ENCODE measurements at regions of chr6 and their contacts with region 1.

Region 1: DNA sequence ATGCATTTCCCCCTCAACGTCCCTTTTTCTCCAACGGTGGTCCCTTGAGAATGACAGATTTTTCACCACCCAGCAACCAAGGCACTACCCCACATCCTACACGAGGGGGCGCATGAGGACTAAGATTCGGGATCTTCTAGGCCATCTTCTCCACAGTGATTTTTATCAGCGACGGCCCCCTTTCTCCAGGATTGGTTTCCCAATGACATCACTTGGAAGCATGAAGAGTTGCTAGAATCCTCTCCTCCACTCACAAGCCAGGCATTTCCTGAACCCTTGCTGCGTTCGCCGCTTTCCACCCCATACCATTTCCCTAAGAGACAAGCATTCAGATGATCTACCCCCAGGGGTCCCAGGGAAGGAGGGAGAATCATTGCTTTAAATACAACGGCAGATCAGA is 252.0 kb downstream of the HIVEP2 start:
- DNase-seq: peak; percentile 66
- H3K4me3 Mint-ChIP-seq: no peak overlapping the region
- H3K27ac Mint-ChIP-seq: peak overlapping the region; percentile 39
- H3K4me1 Mint-ChIP-seq: peaks cover 53% of the 10 kb centered on the region
- H3K27me3 Mint-ChIP-seq: no peaks in the 10 kb centered on the region
- CTCF ChIP-seq: peak; percentile 77

Region 2: DNA sequence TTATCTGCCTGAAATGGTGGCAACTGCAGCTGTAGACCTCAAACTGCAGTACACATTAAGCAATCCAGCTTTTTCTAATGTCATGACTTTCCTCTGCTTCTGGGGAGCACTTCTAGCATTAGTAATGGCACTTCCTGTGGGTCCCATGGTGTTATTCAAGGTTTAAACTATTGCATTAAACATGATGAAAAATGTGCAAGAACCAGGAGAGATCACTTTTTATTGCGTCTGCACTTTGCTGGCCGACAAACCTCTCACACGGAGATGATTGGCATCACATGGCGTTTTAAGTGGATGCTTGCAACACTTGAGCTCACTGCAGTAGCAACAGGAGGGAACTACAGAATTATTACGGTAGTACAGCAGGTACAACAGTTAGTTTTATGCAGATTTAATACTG is 103.6 kb after region 1 on chr6:
- CTCF ChIA-PET with region 1: no interaction called
- intact Hi-C with region 1: no loop called
- DNase-seq: no peak
- H3K4me3 Mint-ChIP-seq: no peak overlapping the region
- H3K27ac Mint-ChIP-seq: no peak overlapping the region
- H3K4me1 Mint-ChIP-seq: peaks cover 11% of the 10 kb centered on the region
- H3K27me3 Mint-ChIP-seq: no peaks in the 10 kb centered on the region
- CTCF ChIP-seq: no peak

Region 3: DNA sequence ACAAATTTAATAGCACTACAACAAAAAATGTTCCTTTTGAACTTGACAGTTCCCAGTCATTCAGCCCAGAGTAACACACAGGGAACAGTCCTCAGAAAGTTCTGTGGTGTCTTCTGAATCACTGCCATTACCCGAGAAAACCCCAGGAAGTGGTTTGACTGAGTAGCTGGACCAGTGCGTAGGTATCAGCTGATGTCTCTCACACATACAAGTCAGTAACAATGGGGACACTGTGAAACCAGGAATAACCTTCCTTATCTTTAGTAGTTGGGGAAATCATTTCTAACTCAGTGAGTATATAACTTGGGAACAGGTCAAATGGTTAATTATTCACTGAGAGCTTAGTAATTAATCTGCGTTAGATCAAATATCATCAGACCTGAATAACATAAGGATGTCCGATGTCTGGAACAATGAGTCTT is 179.0 kb after region 1 on chr6:
- CTCF ChIA-PET with region 1: no interaction called
- intact Hi-C with region 1: loop called (anchors 2 kb)
- DNase-seq: peak; percentile 66
- H3K4me3 Mint-ChIP-seq: peak overlapping the region; percentile 57
- H3K27ac Mint-ChIP-seq: peak overlapping the region; percentile 97
- H3K4me1 Mint-ChIP-seq: peaks cover 86% of the 10 kb centered on the region
- H3K27me3 Mint-ChIP-seq: no peaks in the 10 kb centered on the region
- CTCF ChIP-seq: no peak

Region 4: DNA sequence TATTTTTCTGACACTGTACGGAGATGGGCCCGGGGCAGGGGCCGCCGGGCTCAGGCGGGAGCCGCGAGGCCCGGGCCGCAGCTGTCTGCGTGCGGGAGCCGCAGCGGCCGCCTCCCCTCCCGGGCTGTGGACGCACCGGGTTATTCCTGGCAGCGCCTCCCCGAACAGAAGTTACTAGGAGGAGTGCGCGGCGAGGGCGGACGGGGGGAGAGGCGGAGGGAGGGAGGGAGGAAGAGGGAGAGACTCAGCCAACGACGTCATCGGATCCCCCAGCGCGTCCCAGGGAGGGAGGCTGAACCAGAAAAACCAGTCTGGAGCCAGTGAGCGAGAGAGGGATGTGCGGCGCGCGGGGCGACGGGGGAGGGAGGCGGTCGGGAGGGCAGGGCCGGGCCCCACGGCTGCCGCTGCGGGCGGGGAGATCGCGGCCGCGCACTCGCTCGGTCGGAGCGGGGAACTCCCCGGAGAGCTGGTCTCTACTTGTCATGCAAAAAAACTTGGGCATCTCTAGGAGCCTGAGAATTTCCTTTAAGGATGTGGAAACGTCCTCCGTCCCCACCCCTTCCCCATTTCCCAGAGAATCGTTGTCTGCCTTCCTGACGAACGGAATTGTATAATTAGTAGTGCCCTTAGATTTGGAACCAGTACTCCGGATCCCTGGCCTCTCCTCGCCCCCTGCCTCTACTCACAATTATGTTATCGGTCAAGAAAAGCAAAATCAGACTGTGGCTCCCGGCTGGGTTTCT is 253.4 kb after region 1 on chr6:
- CTCF ChIA-PET with region 1: no interaction called
- intact Hi-C with region 1: loop called (anchors 5 kb)
- DNase-seq: peak; percentile 94
- H3K4me3 Mint-ChIP-seq: peak overlapping the region; percentile 98
- H3K27ac Mint-ChIP-seq: peak overlapping the region; percentile 79
- H3K4me1 Mint-ChIP-seq: peaks cover 23% of the 10 kb centered on the region
- H3K27me3 Mint-ChIP-seq: no peaks in the 10 kb centered on the region
- CTCF ChIP-seq: no peak

Region 5: DNA sequence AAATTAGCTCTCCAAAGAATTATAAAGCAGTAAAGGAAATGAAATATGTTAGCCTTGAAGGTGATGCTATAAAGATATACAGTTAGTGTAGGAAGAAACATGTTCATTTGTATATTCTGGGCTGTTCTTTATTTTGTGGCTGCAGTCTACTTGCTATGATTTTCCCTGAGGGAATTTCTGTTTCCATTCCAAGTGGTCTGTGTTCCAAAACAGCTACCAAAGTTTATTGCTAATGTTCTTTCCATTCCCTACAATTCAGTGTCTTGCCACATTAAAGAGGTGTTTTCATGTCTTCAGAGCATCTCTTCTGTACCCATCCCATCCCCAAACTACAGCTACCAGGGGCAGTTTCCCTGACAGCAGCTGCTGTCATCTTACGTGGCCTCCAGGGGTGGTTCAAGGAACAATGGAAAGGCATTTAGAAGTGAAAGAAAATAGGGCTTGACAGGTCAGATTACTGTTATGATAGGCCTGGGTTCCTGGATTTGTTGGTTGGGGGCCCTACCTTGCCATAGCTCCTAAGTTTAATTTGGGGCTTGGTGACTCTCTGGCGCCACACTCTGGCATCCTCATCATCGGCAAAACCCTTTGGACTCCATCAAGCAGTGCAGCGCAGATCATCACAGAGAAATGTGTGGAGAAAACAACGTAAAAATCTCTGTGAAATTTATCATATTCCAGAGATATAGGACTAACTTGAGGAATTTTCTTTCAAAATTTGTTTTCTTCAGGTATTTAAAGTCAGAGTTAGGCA is 333.9 kb after region 1 on chr6:
- CTCF ChIA-PET with region 1: interaction called, 3 read pairs
- intact Hi-C with region 1: loop called (anchors 5 kb)
- DNase-seq: peak; percentile 15
- H3K4me3 Mint-ChIP-seq: no peak overlapping the region
- H3K27ac Mint-ChIP-seq: no peak overlapping the region
- H3K4me1 Mint-ChIP-seq: no peaks in the 10 kb centered on the region
- H3K27me3 Mint-ChIP-seq: no peaks in the 10 kb centered on the region
- CTCF ChIP-seq: peak; percentile 28

Region 6: DNA sequence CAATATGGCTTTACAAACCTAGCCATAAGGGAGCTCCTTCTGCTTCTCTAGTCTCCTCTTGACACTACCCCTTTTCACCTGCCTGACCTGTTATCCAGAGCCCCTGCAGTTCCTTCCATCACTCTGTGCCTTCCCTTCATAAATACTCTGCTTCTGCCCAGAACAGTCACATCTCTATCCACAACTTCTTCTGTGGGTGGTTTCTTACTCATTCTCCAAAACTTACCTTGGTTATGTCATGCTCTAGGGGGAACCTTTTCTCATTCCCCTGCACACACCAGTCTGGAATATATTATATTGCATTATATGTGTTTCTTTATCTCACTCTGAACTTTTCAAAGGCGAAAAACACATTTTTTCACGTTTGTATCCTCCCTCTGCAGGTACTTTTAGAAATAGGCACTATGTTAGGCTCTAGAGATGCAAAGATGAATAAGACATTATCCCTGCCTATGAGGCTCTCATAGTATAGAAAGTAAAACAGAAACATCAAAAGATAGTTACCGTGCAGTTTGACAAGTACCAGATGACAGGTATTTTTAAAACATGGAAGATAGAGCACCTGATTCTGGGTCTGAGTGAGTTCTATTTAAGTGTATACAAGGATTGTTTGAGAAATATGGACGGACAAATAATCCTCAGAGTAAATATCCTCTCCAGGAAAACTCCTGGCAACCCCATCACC is 419.3 kb after region 1 on chr6:
- CTCF ChIA-PET with region 1: no interaction called
- intact Hi-C with region 1: no loop called
- DNase-seq: no peak
- H3K4me3 Mint-ChIP-seq: no peak overlapping the region
- H3K27ac Mint-ChIP-seq: no peak overlapping the region
- H3K4me1 Mint-ChIP-seq: no peaks in the 10 kb centered on the region
- H3K27me3 Mint-ChIP-seq: no peaks in the 10 kb centered on the region
- CTCF ChIP-seq: no peak

Measured in Calu3 (cell line).